ENCODE measurements at regions of chr11 and their contacts with region 1.

Region 1: DNA sequence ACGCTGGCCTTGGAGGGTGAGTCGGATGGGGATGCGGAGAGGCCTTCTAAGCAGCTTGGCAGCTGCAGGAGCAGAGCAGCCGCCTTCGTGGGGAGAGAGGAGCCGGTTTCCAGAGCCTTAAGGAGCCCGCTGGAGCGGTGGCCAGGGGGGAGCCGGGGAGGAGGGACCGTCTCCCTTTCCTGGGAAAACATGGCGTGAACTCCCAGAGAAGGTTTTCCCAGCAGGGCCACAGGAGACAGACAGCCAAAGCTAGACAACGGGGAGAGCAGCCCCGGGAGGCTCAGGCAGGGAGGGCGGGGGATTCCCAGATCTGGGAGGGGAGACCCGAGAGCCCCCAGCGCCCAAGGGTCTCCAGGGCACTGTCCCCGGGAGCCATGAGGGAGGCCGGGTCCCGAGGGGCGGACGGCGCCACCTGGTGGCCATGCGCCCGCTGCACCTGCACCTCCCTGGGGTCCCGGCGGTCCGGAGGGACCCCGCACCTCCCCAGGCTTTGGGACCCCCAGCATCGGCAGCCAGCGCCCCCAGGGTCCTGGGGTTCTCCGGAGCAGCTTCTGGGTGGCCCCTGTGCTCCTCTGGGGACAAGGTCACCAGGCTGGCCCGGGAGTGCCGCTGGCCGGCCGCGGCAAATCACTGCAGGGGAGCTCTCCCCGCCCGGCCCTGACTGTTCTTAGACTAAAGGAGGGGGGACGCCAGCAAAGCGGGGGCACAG is 2.4 kb upstream of the SYT8 start:
- DNase-seq: no peak
- H3K27ac ChIP-seq: peak overlapping the region; percentile 97
- CTCF ChIP-seq: peak; percentile 92

Region 2: GRCh38 chr11:1763336-1763795 is 69.0 kb before region 1 on chr11:
- CTCF ChIA-PET with region 1: interaction called, 20 read pairs
- POLR2A ChIA-PET with region 1: interaction called, 7 read pairs
- DNase-seq: no peak
- H3K27ac ChIP-seq: peak overlapping the region; percentile 93
- CTCF ChIP-seq: no peak

Region 3: GRCh38 chr11:1970956-1971355 is 138.6 kb after region 1 on chr11:
- CTCF ChIA-PET with region 1: no interaction called
- POLR2A ChIA-PET with region 1: no interaction called
- DNase-seq: no peak
- H3K27ac ChIP-seq: no peak overlapping the region
- CTCF ChIP-seq: no peak